GM12878 (cell line): ENCODE measurements at regions of chr13 and their contacts with region 1.

Region 1: DNA sequence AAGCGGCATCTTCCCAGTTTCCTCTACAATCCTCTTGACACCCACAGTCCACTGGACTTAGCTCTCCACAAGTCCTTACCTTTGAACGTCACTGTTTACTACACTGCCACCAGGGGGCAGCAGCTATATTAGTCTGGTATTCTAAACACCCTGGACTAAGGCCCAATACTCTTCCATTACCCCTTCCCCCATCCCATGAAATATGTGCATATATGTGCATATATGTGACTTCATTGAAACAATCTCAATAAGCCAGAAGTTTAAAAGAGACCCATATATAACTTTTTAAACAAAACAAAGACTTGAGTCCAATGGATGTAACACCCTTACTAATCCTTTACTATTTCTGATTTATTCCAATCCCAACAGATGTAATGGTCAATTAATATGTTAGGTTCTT is 15.5 kb downstream of the GGACT start:
- DNase-seq: peak; percentile 17
- ATAC-seq: peak; percentile 99
- H3K4me3 ChIP-seq: no peak overlapping the region
- H3K27ac ChIP-seq: no peak overlapping the region
- H3K4me1 ChIP-seq: no peaks in the 10 kb centered on the region
- H3K27me3 ChIP-seq: no peaks in the 10 kb centered on the region
- CTCF ChIP-seq: peak; percentile 75 to 79 (median 78)
- EP300 ChIP-seq: no peak
- POLR2A ChIP-seq: no peak
- RAD21 ChIP-seq: peak; percentile 78

Region 2: GRCh38 chr13:100560498-100561157 is 12.5 kb before region 1 on chr13:
- CTCF ChIA-PET with region 1: interaction called, 15 read pairs
- POLR2A ChIA-PET with region 1: no interaction called
- RAD21 ChIA-PET with region 1: interaction called, 4 read pairs
- SMC1A ChIA-PET with region 1: interaction called, 5 read pairs
- in situ Hi-C with region 1: no loop called
- intact Hi-C with region 1: no loop called
- DNase-seq: no peak
- ATAC-seq: no peak
- H3K4me3 ChIP-seq: no peak overlapping the region
- H3K27ac ChIP-seq: no peak overlapping the region
- H3K4me1 ChIP-seq: no peaks in the 10 kb centered on the region
- H3K27me3 ChIP-seq: no peaks in the 10 kb centered on the region
- CTCF ChIP-seq: no peak
- EP300 ChIP-seq: no peak
- POLR2A ChIP-seq: no peak
- RAD21 ChIP-seq: no peak

Region 3: DNA sequence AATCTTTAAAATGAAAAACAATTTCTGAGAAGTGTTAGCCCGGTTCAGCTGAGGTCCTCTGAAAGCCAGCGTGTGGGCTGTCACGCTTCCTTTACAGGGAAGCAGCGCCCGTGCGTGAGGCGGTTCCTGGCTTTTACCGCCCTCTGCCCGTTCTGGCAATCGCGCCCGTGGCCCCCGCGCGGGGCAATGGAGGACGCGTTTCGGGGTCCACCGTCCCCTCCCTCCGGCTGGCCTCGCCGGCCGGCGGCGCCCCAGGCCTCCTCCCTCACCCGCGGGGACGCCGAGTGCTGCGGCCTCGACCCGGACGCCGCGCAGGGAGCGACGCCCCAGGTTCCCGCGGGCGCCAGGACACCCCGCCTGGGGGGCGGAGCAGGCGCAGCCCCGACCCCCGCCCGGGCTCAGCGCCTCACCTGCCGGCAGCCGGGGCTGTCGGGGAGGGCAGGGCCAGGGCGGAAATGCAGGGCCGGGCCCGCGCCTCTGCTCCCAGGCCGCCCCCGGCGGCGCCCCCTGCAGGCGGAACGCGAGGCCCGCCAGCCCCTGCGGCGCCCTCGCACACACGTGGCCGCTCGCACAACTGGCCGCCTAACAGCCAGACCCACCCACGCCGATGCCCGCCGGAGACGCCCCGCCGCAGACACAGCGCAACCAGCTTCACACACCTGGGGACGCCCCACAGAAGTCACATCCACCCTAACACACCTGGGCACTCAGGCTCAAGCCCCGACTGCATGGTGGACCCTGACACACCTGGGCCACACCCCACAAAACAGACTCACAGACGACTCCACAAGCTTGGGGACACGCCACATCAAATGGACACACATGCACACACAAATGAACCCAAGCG is 15.4 kb after region 1 on chr13 and contains the start of gene GGACT:
- CTCF ChIA-PET with region 1: interaction called, 34 read pairs
- POLR2A ChIA-PET with region 1: no interaction called
- RAD21 ChIA-PET with region 1: no interaction called
- SMC1A ChIA-PET with region 1: interaction called, 4 read pairs
- in situ Hi-C with region 1: no loop called
- intact Hi-C with region 1: no loop called
- DNase-seq: peak; percentile 13
- ATAC-seq: peak; percentile 99
- H3K4me3 ChIP-seq: peak within 1 kb of the TSS; percentile 74; the same call in 1 of the 2 replicates
- H3K27ac ChIP-seq: peak within 1 kb of the TSS; percentile 30; the same call in 1 of the 2 replicates
- H3K4me1 ChIP-seq: peaks cover 6% of the 10 kb centered on the region; the same call in 1 of the 2 replicates
- H3K27me3 ChIP-seq: no peaks in the 10 kb centered on the region
- CTCF ChIP-seq: peak; percentile 69 to 76 (median 71); a peak in 5 of 6 replicates
- EP300 ChIP-seq: no peak
- POLR2A ChIP-seq: peak; percentile 81
- RAD21 ChIP-seq: 0 out of 2 replicates have a peak, but pooled peaks have one; percentile 13
- polyA plus RNA-seq, gene GGACT: 0.61 to 0.93 TPM

Region 4: DNA sequence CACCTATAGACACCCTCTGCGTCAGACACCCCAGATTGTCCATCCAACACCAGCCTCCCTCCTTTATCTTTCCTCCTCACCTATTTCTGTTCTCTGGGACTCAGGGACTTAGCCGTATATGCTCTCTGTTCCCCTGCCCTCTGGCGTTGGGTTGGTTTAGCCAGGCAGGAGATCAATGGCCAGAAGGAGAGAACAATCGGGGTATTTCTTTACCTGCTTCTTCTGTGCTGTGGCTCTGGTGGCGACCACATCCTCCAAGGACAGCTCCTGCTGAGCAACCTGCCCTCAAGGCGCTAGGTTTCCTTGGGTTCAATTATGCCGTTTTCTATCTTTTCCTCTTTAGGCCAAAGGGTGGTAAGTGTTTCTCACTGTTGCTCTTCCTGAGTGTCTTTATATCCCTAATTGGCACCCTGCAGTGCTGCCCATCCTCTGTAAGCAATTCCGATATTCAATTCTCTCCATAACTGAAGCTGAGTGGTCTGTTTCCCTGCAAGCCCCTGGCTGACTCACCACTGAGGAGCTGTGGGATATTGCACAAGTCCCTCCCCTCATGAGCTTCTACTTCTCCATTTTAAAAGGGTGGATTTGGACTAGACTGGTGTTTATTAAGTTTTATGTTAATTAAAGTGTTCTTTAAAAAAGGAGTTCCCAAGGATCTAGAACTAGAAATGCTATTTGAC is 165.2 kb after region 1 on chr13:
- CTCF ChIA-PET with region 1: no interaction called
- POLR2A ChIA-PET with region 1: no interaction called
- RAD21 ChIA-PET with region 1: no interaction called
- SMC1A ChIA-PET with region 1: no interaction called
- in situ Hi-C with region 1: no loop called
- intact Hi-C with region 1: no loop called
- DNase-seq: no peak
- ATAC-seq: no peak
- H3K4me3 ChIP-seq: no peak overlapping the region
- H3K27ac ChIP-seq: no peak overlapping the region
- H3K4me1 ChIP-seq: no peaks in the 10 kb centered on the region
- H3K27me3 ChIP-seq: no peaks in the 10 kb centered on the region
- CTCF ChIP-seq: no peak
- EP300 ChIP-seq: no peak
- POLR2A ChIP-seq: no peak
- RAD21 ChIP-seq: no peak

Region 5: GRCh38 chr13:101098873-101099272 is 525.8 kb after region 1 on chr13:
- CTCF ChIA-PET with region 1: interaction called, 23 read pairs
- POLR2A ChIA-PET with region 1: no interaction called
- RAD21 ChIA-PET with region 1: interaction called, 5 read pairs
- SMC1A ChIA-PET with region 1: interaction called, 4 read pairs
- in situ Hi-C with region 1: no loop called
- intact Hi-C with region 1: loop called (anchors 1 kb)
- DNase-seq: no peak
- ATAC-seq: no peak
- H3K4me3 ChIP-seq: no peak overlapping the region
- H3K27ac ChIP-seq: no peak overlapping the region
- H3K4me1 ChIP-seq: no peaks in the 10 kb centered on the region
- H3K27me3 ChIP-seq: peaks cover 0 to 5% of the 10 kb centered on the region in 2 experiments; a peak in 1 of 4 replicates
- CTCF ChIP-seq: no peak
- EP300 ChIP-seq: no peak
- POLR2A ChIP-seq: no peak
- RAD21 ChIP-seq: no peak

Region 6: GRCh38 chr13:101127741-101128353 is 554.7 kb after region 1 on chr13:
- CTCF ChIA-PET with region 1: interaction called, 42 read pairs
- POLR2A ChIA-PET with region 1: no interaction called
- RAD21 ChIA-PET with region 1: interaction called, 28 read pairs
- SMC1A ChIA-PET with region 1: interaction called, 8 read pairs
- in situ Hi-C with region 1: loop called (anchors 10 kb)
- intact Hi-C with region 1: loop called (anchors 1 kb)
- DNase-seq: no peak
- ATAC-seq: peak; percentile 90
- H3K4me3 ChIP-seq: no peak overlapping the region
- H3K27ac ChIP-seq: no peak overlapping the region
- H3K4me1 ChIP-seq: no peaks in the 10 kb centered on the region
- H3K27me3 ChIP-seq: no peaks in the 10 kb centered on the region
- CTCF ChIP-seq: peak; percentile 61 to 76 (median 68)
- EP300 ChIP-seq: no peak
- POLR2A ChIP-seq: no peak
- RAD21 ChIP-seq: peak; percentile 75